Sciatic nerve (tissue), 2 donors: ENCODE measurements at regions of chr6 and their contacts with region 1.

Region 1: DNA sequence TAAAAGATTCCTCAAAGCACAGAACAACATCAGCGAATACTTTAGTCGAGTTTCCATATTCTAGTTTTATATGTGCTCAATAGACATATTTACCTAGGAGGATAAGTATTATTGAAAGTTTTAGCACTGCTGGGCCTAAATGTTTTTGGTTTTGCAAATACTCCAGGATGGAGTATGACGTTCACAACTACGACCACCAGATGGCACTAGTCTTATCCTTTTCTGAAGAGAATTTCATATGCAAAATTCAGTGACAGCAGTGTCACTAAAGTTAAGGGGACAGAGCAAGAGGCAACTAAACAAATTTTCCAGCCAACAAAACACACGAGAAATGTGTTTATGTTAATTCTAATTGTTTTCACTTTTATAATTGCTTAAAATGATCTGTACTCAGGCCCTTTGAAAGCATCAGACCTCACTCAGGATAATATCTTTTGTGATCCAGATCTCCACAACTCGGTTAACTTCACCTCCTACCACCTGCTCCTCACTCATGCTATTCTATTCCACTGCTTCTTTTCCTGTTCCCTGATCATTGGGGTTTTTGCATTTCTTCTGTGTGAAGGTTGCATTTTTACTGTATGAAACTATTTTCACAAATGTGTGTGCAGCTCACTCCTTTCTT is 220.8 kb downstream of the TRDN start:
- DNase-seq: peak; percentile 77
- ATAC-seq: peak; percentile 69

Region 2: DNA sequence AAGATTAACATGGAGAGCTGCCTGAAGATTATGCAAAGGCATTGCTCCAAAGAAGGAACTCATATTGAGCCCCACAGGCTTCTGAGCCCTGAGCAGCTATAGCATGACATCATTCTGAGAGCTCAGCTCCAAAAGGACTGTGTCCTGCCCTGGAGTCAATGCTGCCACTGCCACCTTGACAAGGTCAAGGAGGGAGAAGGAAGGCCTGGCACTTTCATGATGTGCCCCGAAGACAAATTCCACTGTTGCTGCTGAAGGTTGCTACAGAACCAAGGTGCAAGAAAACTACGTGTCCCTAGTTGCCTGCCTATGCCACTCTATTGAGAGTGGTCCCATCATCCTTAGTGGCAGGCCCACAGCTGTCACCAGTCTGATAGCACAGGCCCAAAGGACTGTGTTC is 173.1 kb before region 1 on chr6:
- intact Hi-C with region 1: no loop called
- DNase-seq: no peak
- ATAC-seq: no peak

Region 3: GRCh38 chr6:123715006-123715875 is 299.3 kb after region 1 on chr6:
- intact Hi-C with region 1: loop called (anchors 5 kb)
- DNase-seq: no peak
- ATAC-seq: peak; percentile 50